PC-9 (cell line): ENCODE measurements at regions of chr15 and their contacts with region 1.

Region 1: DNA sequence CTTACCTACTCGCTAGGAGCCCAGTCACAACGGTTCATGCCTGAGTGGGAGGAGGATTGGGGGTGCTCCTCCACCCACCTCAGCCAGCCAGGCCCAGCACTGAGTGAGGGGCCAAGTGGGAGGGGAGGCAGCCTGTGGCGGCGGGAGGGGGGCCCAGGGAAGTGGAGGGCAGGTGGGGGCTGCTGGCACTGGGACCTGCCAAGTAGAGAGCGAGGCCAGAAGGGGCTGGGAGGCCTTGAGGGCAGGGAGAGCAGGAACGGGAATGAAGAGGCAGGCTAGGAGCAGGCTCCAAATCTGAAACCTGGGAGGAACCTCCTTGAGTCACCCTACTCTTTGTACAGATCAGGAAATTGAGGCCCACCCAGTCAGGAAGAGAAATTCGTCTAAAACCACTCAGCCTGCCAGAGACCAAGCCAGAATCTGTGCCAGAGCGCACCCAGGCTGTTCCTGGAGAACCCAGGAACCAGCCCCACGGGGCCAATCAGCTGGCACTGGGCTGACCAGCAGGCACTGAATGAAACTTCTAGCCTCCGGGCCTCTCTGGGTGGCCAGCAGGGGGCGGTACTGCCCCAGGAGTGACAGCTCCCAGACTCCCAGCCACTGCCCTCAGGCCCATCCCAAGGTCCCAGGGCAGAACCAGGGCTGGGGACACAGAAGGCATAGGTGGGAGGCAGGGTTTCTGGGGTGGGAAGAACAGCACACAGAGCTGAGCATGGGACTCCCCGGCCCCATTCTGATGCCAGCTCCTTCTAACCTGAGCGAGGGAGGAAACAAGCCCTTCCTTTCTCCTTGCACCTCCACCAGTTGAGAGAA is 14.8 kb upstream of the CYP11A1 start:
- DNase-seq: peak; percentile 62 to 91
- H3K4me3 ChIP-seq: no peak overlapping the region
- H3K27ac ChIP-seq: no peak overlapping the region
- H3K4me1 ChIP-seq: peaks cover 63% of the 10 kb centered on the region
- H3K27me3 ChIP-seq: no peaks in the 10 kb centered on the region
- CTCF ChIP-seq: peak; percentile 91

Region 2: GRCh38 chr15:74036271-74037170 is 345.7 kb before region 1 on chr15:
- CTCF ChIA-PET with region 1: no interaction called
- POLR2A ChIA-PET with region 1: interaction called, 13 read pairs
- intact Hi-C with region 1: no loop called
- DNase-seq: peak in 1 of 2 experiments; percentile 26
- H3K4me3 ChIP-seq: no peak overlapping the region
- H3K27ac ChIP-seq: no peak overlapping the region
- H3K4me1 ChIP-seq: peaks cover 7% of the 10 kb centered on the region; the same call in 1 of the 2 replicates
- H3K27me3 ChIP-seq: no peaks in the 10 kb centered on the region
- CTCF ChIP-seq: peak; percentile 58

Region 3: DNA sequence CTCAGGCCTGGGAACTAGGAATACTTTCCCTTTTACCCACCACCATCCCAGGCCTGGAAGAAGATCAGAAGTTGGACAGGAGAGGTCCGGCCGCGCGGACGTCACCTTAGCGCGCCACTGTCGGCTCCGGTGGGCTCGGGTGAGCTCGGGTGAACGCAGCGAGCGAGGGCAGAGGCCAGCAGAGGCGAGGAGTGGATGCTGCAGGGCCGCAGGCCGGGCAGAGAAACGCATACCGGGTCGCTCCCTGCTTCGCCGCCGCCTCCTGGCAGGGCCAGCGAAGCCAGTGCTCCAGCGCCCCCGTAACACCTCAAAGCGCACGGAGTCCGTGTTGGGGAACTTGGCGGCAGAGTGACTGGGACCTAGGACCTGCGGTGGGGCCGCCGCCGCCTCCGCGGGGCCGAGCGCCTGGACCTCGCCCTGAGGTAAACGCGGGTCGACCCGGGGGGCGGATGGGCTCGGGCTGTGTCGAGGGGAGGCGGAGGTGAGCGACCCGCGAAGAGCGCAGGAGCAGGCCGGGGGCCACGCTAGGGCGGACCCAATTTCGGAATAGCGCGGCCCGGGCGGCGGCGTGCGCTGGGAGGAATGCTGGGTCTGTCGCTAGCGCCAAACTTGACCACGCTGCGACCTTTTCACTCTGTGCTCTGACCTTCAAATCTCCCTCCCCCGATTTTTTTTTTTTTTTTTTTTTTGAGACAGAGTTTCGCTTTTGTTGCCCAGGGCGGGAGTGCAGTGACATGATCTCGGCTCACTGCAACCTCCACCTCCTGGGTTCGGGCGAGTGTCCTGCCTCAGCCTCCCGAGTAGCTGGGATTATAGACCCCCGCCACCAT is 16.4 kb before region 1 on chr15:
- CTCF ChIA-PET with region 1: no interaction called
- POLR2A ChIA-PET with region 1: no interaction called
- intact Hi-C with region 1: no loop called
- DNase-seq: peak; percentile 44 to 59
- H3K4me3 ChIP-seq: peak overlapping the region; percentile 86
- H3K27ac ChIP-seq: peak overlapping the region; percentile 86
- H3K4me1 ChIP-seq: peaks cover 28% of the 10 kb centered on the region
- H3K27me3 ChIP-seq: no peaks in the 10 kb centered on the region
- CTCF ChIP-seq: no peak

Region 4: DNA sequence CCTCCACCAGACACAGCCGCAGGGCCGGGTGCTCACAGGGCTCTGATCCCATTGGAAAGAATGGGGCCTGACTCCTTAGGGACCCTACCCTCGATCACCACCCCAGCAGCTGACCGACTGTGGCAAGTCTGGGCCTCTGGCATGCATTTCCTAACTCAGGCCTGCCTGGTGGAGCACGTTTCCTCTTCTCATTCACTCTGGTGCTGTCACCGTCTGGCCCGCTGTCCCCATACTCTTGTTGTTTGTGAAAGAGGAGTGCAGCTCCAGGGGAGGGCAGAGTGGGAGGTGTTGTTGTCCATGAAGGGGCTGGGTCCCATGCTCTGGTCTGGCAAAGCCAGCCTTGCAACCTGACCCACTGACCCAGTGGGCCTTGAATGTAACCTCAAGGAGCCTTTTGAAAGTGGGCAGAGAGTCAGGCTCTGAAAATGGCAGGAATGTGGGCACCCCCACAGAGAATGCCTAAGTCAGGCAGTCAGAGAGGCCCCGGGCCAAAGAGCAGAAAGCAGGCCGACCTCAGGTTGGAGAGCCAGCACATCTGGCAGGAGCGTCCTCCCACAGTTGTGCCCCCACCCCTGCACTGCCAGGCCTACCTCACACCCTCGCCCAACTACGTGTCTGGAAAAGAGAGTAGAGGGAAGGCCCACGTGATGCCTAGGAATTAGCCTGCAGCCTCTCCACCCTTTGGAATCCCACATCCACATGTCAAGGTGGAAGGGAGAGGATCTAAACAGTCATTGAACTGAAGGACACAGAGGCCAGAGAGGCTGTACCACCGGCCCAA is 40.6 kb after region 1 on chr15:
- CTCF ChIA-PET with region 1: interaction called, 8 read pairs
- POLR2A ChIA-PET with region 1: interaction called, 22 read pairs
- intact Hi-C with region 1: loop called (anchors 1 kb)
- DNase-seq: peak; percentile 93 to 96
- H3K4me3 ChIP-seq: no peak overlapping the region
- H3K27ac ChIP-seq: peak overlapping the region; percentile 80
- H3K4me1 ChIP-seq: peaks cover 65% of the 10 kb centered on the region
- H3K27me3 ChIP-seq: no peaks in the 10 kb centered on the region
- CTCF ChIP-seq: no peak

Region 5: GRCh38 chr15:74438721-74439316 is 56.6 kb after region 1 on chr15:
- CTCF ChIA-PET with region 1: interaction called, 5 read pairs
- POLR2A ChIA-PET with region 1: interaction called, 19 read pairs
- intact Hi-C with region 1: loop called (anchors 1 kb)
- DNase-seq: peak; percentile 66 to 78
- H3K4me3 ChIP-seq: no peak overlapping the region
- H3K27ac ChIP-seq: no peak overlapping the region
- H3K4me1 ChIP-seq: 0 out of 2 replicates have a peak, but pooled peaks cover 6% of the 10 kb centered on the region
- H3K27me3 ChIP-seq: no peaks in the 10 kb centered on the region
- CTCF ChIP-seq: peak; percentile 87

Region 6: DNA sequence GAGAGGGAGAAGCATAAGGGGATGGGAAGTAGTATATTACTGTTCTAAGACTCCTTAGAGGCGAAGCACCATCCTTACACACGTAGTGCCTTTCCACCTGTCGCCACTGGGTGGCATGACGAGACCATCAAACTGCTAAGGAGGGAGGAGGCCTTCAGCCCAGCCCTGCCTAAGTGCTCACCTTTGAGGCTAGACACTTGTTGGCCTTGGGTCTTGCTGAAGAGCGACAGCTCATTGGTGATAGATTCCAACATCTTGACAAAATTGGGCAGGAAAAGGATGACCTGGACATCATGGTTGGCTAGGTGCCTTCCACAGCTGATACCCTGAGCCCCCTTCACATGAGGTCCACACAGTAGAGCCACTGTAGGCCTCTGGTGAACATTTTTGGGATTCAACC is 253.0 kb after region 1 on chr15:
- CTCF ChIA-PET with region 1: interaction called, 11 read pairs
- POLR2A ChIA-PET with region 1: no interaction called
- intact Hi-C with region 1: no loop called
- DNase-seq: peak in 1 of 2 experiments; percentile 58
- H3K4me3 ChIP-seq: no peak overlapping the region
- H3K27ac ChIP-seq: no peak overlapping the region
- H3K4me1 ChIP-seq: no peaks in the 10 kb centered on the region
- H3K27me3 ChIP-seq: no peaks in the 10 kb centered on the region
- CTCF ChIP-seq: peak; percentile 94